ENCODE measurements at regions of chr11 and their contacts with region 1.

Region 1: DNA sequence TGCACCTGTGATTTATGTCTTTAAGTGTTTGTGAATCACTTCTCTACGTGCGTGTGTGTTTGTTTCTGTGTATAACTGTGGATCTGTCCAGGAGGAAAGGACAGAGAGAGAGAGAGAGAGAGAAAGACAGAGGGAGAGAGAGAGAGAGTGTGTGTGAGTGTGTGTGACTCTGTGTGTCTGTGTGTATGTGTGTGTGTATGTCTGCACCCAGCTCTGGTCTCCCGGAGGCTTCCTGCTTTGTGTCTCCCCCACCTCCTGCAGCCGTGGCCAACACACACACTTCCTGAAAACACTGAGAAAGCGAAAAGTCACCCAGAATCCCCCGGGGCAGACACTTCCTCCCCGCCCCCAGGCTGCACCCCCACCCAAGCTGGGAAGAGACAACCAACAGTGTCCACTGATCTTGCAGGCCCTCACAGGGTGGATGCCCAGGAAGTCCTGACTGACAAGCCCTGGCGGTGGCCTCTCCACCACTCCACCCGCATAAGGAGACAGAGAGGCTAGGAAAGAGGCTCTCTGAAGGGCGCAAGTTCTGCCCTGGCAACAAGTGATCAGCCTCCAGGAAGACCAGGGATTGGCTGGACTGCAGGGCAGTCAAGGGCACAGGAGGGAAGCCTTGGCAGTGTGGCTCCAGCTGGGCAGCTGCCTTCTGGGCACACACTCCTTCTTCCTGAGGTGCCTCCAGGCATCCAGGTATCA is 30.0 kb downstream of the ARAP1 start:
- DNase-seq: peak; percentile 46
- H3K4me3 ChIP-seq: peak overlapping the region; percentile 50
- H3K27me3 ChIP-seq: no peaks in the 10 kb centered on the region
- CTCF ChIP-seq: no peak

Region 2: GRCh38 chr11:72174299-72175070 is 547.7 kb before region 1 on chr11:
- CTCF ChIA-PET with region 1: no interaction called
- POLR2A ChIA-PET with region 1: interaction called, 11 read pairs
- DNase-seq: no peak
- H3K4me3 ChIP-seq: no peak overlapping the region
- H3K27me3 ChIP-seq: no peaks in the 10 kb centered on the region
- CTCF ChIP-seq: no peak

Region 3: GRCh38 chr11:72735495-72736027 is 13.4 kb after region 1 on chr11:
- CTCF ChIA-PET with region 1: interaction called, 21 read pairs
- POLR2A ChIA-PET with region 1: no interaction called
- DNase-seq: no peak
- H3K4me3 ChIP-seq: no peak overlapping the region
- H3K27me3 ChIP-seq: no peaks in the 10 kb centered on the region
- CTCF ChIP-seq: no peak

Region 4: DNA sequence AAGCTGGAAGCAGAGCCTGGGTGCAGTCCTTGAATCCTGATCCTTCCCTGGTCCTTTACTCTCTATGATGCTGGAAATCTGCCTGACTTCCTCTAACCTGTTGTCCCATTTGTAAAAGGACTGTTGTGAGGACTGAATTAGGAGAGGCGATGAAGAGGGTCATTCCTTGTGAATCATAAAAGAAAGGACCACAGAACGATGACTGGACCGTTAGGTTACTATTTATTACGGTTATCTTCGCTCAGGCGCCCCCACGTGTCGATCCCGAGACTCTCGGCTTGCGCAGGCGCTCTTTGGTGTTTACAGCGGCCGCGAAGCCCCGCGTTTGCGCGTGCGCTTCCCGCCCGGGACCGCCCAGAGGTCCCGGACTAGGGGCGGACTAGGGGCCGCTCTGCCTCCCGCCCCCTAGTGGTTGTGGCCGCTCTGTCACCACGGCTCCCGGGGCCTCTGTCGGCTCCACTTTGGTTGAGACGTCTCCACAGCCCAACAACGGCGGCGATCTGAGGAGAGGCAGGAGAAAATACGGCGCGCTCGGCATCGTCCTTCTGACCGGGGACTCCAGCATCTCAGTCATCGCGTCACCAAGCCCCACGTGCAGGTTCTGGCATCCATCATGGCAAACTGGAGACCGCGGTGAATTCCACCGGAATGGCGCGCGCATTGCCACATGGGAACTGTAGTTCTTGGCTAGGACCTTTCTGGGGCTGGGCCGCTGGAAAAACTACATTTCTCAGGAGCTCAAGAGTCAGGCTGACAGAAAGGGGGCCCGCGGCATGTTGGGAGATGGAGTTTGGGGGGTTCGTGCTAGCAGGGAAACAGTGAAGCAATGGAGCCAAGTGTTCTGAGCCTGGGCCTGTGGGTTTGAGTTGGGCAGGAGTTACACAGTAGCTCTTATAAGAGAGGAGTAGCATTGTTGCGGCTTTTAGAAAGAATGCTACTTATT is 71.5 kb after region 1 on chr11 and contains the start of gene STARD10:
- CTCF ChIA-PET with region 1: interaction called, 139 read pairs
- POLR2A ChIA-PET with region 1: no interaction called
- DNase-seq: peak; percentile 64
- H3K4me3 ChIP-seq: peak within 1 kb of the TSS; percentile 68
- H3K27me3 ChIP-seq: no peaks in the 10 kb centered on the region
- CTCF ChIP-seq: peak; percentile 98
- polyA plus RNA-seq, gene STARD10: 25.4 and 37.1 TPM in 2 replicates

Region 5: DNA sequence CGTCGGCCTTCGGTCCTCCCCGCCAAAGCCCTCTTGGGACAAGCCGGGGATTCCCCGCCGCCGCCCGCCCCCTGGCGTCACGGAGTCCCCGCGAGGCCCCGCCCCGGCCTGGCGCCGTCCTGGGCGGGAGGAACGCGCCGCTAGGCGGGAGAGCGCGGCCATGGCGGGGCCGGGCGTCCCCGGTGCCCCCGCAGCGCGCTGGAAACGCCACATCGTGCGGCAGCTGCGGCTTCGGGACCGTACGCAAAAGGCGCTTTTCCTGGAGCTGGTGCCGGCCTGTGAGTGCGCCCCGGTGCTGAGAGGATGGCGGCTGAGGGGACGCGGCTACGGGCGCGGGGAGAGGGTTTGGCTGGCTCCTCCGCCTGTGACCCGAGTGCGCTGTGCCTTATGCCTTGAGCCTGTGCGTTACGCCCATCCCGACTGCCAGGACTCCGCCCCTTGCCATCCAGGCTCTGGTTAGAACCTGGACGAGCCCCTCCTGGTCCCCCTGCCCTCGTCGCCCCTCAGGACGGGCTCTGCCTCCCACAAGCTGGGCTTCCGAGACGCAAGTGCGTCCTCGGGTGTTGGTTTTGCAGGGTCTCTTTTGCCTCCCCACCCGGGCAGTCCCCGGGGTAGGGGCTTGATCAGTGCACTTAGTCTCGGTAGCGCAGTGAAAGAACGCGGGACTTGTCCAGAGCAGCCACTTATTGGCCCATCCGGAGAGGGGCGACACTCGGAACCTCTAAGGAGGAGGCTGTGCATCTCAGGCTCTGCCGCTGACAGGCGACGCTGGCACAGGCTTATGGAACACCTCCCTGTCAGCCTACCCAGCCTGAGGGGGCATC is 92.3 kb after region 1 on chr11 and contains the start of gene ATG16L2:
- CTCF ChIA-PET with region 1: interaction called, 40 read pairs
- POLR2A ChIA-PET with region 1: interaction called, 3 read pairs
- DNase-seq: no peak
- H3K4me3 ChIP-seq: peak within 1 kb of the TSS; percentile 68
- H3K27me3 ChIP-seq: no peaks in the 10 kb centered on the region
- CTCF ChIP-seq: peak; percentile 31
- polyA plus RNA-seq, gene ATG16L2: 8.3 and 10.1 TPM in 2 replicates

Region 6: GRCh38 chr11:72930008-72930407 is 207.8 kb after region 1 on chr11:
- CTCF ChIA-PET with region 1: no interaction called
- POLR2A ChIA-PET with region 1: no interaction called
- DNase-seq: no peak
- H3K4me3 ChIP-seq: no peak overlapping the region
- H3K27me3 ChIP-seq: no peaks in the 10 kb centered on the region
- CTCF ChIP-seq: no peak